ENCODE measurements at regions of chr17 and their contacts with region 1.

Region 1: DNA sequence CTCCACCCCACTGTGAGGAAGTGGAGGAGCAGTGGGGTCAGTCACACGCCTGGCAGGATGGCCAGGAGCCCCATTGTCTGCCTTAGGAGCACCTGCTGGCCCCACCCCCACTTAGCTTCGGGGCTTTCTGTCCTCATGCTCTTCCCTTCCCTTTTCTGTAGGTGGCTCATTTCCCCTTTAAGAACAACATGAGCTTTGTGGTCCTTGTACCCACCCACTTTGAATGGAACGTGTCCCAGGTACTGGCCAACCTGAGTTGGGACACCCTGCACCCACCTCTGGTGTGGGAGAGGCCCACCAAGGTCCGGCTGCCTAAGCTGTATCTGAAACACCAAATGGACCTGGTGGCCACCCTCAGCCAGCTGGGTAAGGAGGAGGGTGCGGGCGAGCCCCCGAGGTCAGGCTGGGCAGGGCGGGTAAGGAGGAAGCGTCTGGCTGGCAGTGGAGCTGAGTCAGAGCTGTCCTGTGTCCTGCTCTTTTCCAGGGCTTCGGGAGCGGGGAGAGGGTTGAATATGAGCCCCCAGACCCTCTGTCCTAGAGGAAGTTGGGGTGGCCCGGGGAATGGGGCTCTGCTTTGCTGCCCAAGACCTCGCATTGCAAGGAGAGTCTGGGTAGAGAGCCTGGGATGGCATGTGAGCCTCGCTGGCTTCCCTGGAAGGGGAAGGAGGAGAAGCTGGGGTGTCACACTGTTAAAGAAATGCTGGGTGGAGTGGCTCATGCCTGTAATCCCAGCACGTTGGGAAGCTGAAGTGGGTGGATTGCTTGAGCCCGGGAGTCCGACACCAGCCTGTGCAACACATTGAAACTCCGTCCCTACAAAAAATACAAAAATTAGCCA is 9.2 kb upstream of the SERPINF1 start:
- DNase-seq: peak; percentile 35 to 77 (median 67)
- H3K4me3 ChIP-seq: peak overlapping the region in 5 of 7 experiments; percentile 23 to 67 (median 31)
- H3K27ac ChIP-seq: no peak overlapping the region
- H3K4me1 ChIP-seq: peaks cover 0 to 23% (median 13%) of the 10 kb centered on the region in 4 experiments
- H3K27me3 ChIP-seq: no peaks in the 10 kb centered on the region

Region 2: GRCh38 chr17:1737531-1738291 is 14.9 kb before region 1 on chr17:
- CTCF ChIA-PET with region 1: no interaction called
- POLR2A ChIA-PET with region 1: no interaction called
- DNase-seq: no peak
- H3K4me3 ChIP-seq: no peak overlapping the region
- H3K27ac ChIP-seq: no peak overlapping the region
- H3K4me1 ChIP-seq: peaks cover 0 to 8% (median 0%) of the 10 kb centered on the region in 4 experiments
- H3K27me3 ChIP-seq: no peaks in the 10 kb centered on the region

Region 3: DNA sequence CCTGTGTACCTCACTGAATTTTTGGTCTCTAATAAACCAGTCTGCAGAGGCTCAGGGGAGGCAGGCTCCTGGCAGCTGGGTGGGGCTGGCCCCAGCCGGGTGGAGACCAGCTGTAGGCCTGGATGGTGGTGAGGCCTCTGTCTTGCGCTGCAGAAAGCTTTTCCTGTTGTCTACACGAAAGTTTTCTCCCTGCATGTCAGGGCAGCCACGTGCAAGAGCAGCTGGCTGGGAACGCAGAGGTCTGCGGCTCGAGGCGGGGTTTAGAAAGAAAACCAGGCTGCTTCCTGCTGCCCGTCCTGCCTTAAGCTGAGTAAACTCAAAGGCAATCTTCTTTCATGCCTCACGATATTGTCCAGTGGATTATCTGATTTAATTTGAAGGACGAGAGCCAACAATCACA is 11.6 kb after region 1 on chr17:
- CTCF ChIA-PET with region 1: interaction called, 12 read pairs
- POLR2A ChIA-PET with region 1: interaction called, 3 read pairs
- DNase-seq: peak; percentile 55 to 93 (median 89)
- H3K4me3 ChIP-seq: peak overlapping the region in 2 of 7 experiments; percentile 16 to 19
- H3K27ac ChIP-seq: peak overlapping the region in 1 of 2 experiments; percentile 53
- H3K4me1 ChIP-seq: peaks cover 7 to 41% (median 28%) of the 10 kb centered on the region in 4 experiments
- H3K27me3 ChIP-seq: no peaks in the 10 kb centered on the region